ENCODE measurements at regions of chr10 and their contacts with region 1.

Region 1: GRCh38 chr10:69327463-69328379 is 49.4 kb downstream of the HK1 start:
- DNase-seq: peak; percentile 68 to 87
- ATAC-seq: peak; percentile 93 to 94 (median 93)
- H3K4me3 ChIP-seq: peak overlapping the region; percentile 64
- H3K27ac ChIP-seq: peak overlapping the region; percentile 93
- H3K4me1 ChIP-seq: peaks cover 71% of the 10 kb centered on the region
- H3K27me3 ChIP-seq: no peaks in the 10 kb centered on the region
- CTCF ChIP-seq: no peak

Region 2: GRCh38 chr10:69375307-69376151 is 47.8 kb after region 1 on chr10:
- intact Hi-C with region 1: loop called in 1 of 2 experiments (anchors 5 kb)
- DNase-seq: peak; percentile 43 to 84
- ATAC-seq: peak; percentile 88 to 97 (median 90)
- H3K4me3 ChIP-seq: peak overlapping the region; percentile 34
- H3K27ac ChIP-seq: peak overlapping the region; percentile 78
- H3K4me1 ChIP-seq: peaks cover 50% of the 10 kb centered on the region
- H3K27me3 ChIP-seq: no peaks in the 10 kb centered on the region
- CTCF ChIP-seq: no peak